Right cardiac atrium (tissue), 5 donors: ENCODE measurements at regions of chr3 and their contacts with region 1.

Region 1: DNA sequence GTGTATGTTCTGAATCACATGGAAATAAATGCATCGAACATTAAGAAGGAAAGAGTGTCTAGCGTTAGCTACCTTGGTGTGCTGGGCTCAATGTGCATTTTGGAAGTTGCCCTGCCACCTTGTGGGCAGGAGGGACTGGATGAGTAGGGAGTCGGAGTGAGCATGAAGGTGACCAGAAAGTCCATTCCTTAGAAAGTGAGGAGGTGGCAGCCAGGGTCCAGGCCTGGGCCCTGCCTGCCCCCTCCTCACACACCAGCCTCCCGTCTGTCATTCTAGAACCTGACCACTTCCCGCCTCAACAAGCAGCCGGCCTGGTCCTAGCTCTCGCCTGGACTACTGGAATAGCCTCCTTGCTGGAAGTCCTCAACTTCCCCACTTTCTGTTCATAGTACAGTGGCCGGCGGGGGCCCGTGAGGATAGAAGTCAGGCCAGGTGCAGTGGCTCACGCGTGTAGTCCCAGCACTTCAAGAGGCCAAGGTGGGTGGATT is 10.2 kb upstream of the GATA2 start:
- DNase-seq: peak in 1 of 3 donors; percentile 25
- ATAC-seq: no peak
- H3K4me3 ChIP-seq: no peak overlapping the region
- H3K27ac ChIP-seq: no peak overlapping the region
- H3K4me1 ChIP-seq: no peaks in the 10 kb centered on the region
- H3K27me3 ChIP-seq: no peaks in the 10 kb centered on the region

Region 2: DNA sequence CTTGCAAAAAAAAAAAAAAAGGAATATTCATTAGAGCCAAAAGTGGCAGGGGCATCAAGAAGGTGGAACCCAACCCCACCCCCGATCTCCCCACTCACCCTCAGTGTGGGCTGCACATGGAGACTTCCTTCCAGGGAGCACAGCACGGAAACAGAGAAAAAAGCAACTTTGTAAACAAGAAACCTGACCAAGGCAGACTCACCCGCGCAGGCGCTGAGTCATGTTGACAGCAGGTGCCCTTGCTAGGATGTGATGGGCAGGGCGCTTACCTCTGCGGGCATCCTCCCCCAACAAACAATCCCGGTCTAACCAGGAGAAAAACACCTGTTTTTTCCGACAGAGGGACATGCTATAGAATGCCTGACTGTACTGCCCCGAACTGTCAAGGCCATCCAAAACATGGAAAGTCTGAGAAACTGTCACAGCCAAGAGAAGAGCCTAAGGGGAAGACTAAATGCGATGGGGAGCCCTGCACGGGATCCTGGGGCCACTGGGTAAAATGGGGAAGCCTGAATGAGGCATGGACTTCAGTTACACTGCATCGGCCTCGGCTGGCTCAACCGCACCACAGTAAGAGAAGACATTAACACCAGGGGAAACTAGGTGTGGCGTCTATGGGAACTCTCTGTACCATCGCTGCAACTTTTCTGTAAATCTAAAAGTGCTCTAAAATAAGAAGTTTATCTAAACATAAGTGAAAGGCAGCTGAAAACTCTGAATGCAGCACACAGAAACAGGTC is 56.4 kb after region 1 on chr3:
- intact Hi-C with region 1: loop called in 1 of 4 experiments (anchors 10 kb)
- DNase-seq: peak in 1 of 3 donors; percentile 26
- ATAC-seq: no peak
- H3K4me3 ChIP-seq: no peak overlapping the region
- H3K27ac ChIP-seq: no peak overlapping the region
- H3K4me1 ChIP-seq: no peaks in the 10 kb centered on the region
- H3K27me3 ChIP-seq: no peaks in the 10 kb centered on the region

Region 3: DNA sequence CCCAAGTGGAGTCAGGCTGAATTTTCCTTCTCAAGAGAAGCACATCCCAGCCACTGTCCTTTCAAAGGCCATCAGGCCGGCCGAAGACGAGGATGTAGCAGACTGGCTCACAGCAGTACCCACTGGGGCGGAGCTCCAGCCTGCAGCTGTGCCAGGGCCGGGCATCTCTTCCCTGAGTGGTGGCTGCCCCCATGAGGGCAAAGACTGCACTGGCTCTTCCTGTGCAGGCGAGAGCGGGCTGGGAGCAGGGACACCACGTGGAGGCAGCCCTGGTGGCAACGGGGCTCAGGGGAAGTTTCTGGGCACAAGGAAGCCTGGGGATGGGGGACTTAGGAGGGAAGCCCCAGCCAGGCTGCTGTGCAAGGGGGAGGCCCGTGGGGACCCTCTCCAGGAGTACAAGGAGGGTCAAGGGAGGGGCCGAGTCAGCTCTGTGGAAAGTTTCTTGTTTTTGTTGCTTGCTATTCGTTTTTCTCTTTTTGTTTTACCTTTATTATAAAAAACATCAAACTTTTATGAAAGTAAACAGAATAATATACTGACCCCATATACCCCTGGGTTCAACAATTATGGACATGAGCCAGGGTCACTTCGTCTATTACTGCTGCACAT is 81.3 kb after region 1 on chr3:
- intact Hi-C with region 1: loop called in 1 of 4 experiments (anchors 10 kb)
- DNase-seq: peak; percentile 80 to 91 (median 83)
- ATAC-seq: peak; percentile 98 to 99
- H3K4me3 ChIP-seq: no peak overlapping the region
- H3K27ac ChIP-seq: no peak overlapping the region
- H3K4me1 ChIP-seq: no peaks in the 10 kb centered on the region
- H3K27me3 ChIP-seq: no peaks in the 10 kb centered on the region

Region 4: DNA sequence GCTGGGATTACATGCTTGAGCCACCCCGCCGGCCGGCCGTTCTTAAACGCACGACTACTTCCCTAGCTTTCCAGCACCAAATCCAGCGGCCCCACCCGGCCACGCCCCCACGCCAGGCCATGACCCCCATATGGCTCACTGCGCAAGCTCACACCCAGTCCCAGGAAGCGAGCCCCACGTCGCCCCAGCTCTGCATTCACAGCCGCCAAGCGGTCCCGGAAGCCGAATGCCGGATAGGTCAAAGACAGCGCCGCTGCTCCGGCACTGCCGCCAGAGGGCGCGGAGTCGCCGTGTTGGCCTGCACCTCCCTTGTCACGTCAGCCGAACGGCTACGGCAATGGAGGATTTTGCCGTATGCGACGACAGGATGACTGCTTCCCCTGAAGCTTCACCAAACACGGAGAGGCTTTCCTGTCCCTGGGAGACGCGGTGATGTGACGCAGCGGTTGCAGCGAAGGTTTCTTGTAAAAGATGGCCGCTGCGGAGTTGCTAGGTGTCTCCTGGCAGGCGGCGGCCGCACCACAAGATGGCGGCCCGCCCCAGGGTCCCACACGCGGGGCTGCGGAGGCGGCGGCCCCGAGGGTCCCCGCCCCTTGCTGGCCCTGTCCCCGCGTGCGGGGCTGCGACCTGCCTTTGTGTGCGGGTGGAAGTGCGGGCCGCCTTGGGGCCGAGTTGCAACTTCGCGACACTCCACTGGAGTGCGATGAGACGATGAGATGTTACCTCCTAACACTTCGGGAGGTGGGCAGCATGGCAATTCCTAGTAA is 177.6 kb after region 1 on chr3:
- intact Hi-C with region 1: no loop called
- DNase-seq: peak; percentile 100
- ATAC-seq: peak; percentile 99 to 100
- H3K4me3 ChIP-seq: peak overlapping the region; percentile 66
- H3K27ac ChIP-seq: peak overlapping the region; percentile 98
- H3K4me1 ChIP-seq: no peaks in the 10 kb centered on the region
- H3K27me3 ChIP-seq: no peaks in the 10 kb centered on the region